Mammary epithelial cell (primary cell): ENCODE measurements at regions of chr6 and their contacts with region 1.

Region 1: GRCh38 chr6:13908955-13909381 is 15.8 kb upstream of the RNF182 start:
- DNase-seq: peak; percentile 55
- H3K4me3 ChIP-seq: no peak overlapping the region
- H3K27ac ChIP-seq: no peak overlapping the region
- H3K4me1 ChIP-seq: peaks cover 14% of the 10 kb centered on the region
- H3K27me3 ChIP-seq: peaks cover 4% of the 10 kb centered on the region
- CTCF ChIP-seq: peak; percentile 78 to 79

Region 2: DNA sequence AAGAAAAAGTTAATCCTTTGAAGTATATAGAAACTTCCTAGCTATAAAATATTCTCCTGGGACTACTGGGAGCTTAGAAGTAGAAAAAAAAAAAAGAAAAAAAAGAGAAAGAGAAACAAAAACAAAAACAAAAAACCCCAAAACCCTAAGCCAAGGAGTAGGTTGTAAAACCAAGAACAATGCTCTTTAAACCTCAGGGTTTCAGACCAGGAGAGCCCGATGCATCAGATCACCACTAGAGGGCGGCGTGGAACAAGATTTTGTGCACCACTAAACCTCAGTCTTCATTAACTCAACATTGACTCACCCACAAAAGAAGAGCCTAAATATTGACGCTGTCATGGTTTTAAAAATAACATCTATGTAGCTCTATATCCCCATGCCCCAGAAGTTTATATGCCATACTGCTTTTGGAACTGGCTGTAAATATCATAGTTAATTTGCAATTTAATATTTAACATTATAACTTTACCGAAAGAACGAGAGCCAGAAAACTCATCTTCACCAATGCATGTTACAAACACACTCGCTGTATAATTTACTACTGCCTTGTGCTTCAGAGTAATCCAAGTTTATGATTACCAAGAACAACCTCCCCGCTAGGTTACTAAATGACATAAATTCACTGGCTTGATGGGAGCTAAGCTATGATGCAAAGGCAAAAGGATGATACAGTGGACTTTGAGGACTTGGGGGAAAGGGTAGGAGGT is 113.8 kb before region 1 on chr6:
- CTCF ChIA-PET with region 1: no interaction called
- dilution Hi-C with region 1: no loop called
- in situ Hi-C with region 1: no loop called
- intact Hi-C with region 1: loop called (anchors 2 kb)
- DNase-seq: peak; percentile 73
- H3K4me3 ChIP-seq: no peak overlapping the region
- H3K27ac ChIP-seq: peak overlapping the region; percentile 53
- H3K4me1 ChIP-seq: peaks cover 5% of the 10 kb centered on the region
- H3K27me3 ChIP-seq: no peaks in the 10 kb centered on the region
- CTCF ChIP-seq: peak; percentile 94 to 97

Region 3: GRCh38 chr6:14046476-14047068 is 137.6 kb after region 1 on chr6:
- CTCF ChIA-PET with region 1: interaction called, 8 read pairs
- dilution Hi-C with region 1: no loop called
- in situ Hi-C with region 1: no loop called
- intact Hi-C with region 1: loop called (anchors 1 kb)
- DNase-seq: peak; percentile 39
- H3K4me3 ChIP-seq: no peak overlapping the region
- H3K27ac ChIP-seq: no peak overlapping the region
- H3K4me1 ChIP-seq: no peaks in the 10 kb centered on the region
- H3K27me3 ChIP-seq: no peaks in the 10 kb centered on the region
- CTCF ChIP-seq: peak; percentile 88 to 91

Region 4: DNA sequence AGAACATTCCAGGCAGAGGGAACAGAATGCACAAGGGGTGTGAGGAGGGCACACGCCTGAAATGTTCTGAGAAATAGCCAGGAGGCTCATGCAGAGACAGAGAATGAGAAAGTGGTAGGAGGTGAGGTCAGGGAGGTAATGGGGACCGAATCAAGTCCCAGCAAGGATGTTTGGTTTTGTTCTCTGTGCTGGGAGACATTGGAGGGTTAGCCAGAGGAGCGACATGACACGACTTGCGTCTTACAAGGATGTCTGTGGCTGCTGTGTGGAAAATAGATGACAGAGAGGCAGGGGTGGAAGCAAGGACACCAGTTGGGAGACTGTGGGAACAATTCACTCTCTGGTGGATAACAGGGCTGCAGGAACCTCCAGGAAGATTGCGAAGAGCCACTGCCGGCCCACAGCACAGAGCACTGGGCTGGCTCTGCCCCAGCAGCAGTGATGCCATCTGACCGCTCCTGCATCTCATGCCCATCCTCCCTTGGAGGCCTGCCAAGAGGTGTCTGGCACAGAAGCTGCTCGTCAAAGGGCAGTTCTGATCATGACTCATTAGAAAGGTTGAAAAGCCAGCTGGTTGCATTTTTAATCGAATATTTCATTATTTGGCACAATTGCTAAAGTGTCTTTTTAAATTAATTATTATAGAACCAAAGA is 150.9 kb after region 1 on chr6:
- CTCF ChIA-PET with region 1: no interaction called
- dilution Hi-C with region 1: loop called (anchors 10 kb)
- in situ Hi-C with region 1: loop called (anchors 5 kb)
- intact Hi-C with region 1: no loop called
- DNase-seq: peak; percentile 79
- H3K4me3 ChIP-seq: peak overlapping the region in 2 of 3 experiments; percentile 2 to 17
- H3K27ac ChIP-seq: no peak overlapping the region
- H3K4me1 ChIP-seq: peaks cover 16% of the 10 kb centered on the region
- H3K27me3 ChIP-seq: no peaks in the 10 kb centered on the region
- CTCF ChIP-seq: no peak

Region 5: GRCh38 chr6:14144678-14145113 is 235.7 kb after region 1 on chr6:
- CTCF ChIA-PET with region 1: no interaction called
- dilution Hi-C with region 1: no loop called
- in situ Hi-C with region 1: loop called (anchors 5 to 10 kb)
- intact Hi-C with region 1: loop called (anchors 1 kb)
- DNase-seq: peak; percentile 30
- H3K4me3 ChIP-seq: no peak overlapping the region
- H3K27ac ChIP-seq: no peak overlapping the region
- H3K4me1 ChIP-seq: no peaks in the 10 kb centered on the region
- H3K27me3 ChIP-seq: no peaks in the 10 kb centered on the region
- CTCF ChIP-seq: peak; percentile 92 to 99

Region 6: GRCh38 chr6:15621203-15622044 is 1712.5 kb after region 1 on chr6:
- CTCF ChIA-PET with region 1: no interaction called
- dilution Hi-C with region 1: no loop called
- in situ Hi-C with region 1: no loop called
- intact Hi-C with region 1: loop called (anchors 5 kb)
- DNase-seq: peak; percentile 73
- H3K4me3 ChIP-seq: no peak overlapping the region
- H3K27ac ChIP-seq: peak overlapping the region; percentile 43
- H3K4me1 ChIP-seq: peaks cover 15% of the 10 kb centered on the region
- H3K27me3 ChIP-seq: no peaks in the 10 kb centered on the region
- CTCF ChIP-seq: no peak